H1 (cell line): ENCODE measurements at regions of chr11 and their contacts with region 1.

Region 1: DNA sequence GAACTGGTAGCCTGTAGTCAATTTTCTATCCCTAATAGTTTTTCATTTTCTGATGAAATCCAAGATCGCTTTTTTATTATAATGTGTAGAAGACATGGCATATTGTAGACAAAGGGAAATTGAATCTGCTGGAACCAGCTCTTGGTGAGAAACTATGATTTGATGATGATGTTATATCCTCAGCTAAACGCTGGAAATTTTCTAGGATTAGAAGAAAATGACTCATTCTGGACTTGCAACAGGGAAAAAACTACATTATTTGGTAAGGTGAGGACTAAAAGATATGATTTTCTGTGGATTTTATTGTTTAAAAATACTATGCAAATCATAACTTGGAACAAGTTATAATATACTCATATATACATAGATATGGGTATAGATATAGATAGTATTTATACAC is 14.1 kb upstream of the PGM2L1 start:
- DNase-seq: no peak
- H3K4me3 ChIP-seq: no peak overlapping the region
- H3K27ac ChIP-seq: no peak overlapping the region
- H3K4me1 ChIP-seq: peaks cover 0 to 4% (median 0%) of the 10 kb centered on the region in 4 experiments; a peak in 1 of 7 replicates
- H3K27me3 ChIP-seq: no peaks in the 10 kb centered on the region
- CTCF ChIP-seq: no peak
- EP300 ChIP-seq: no peak
- POLR2A ChIP-seq: no peak
- RAD21 ChIP-seq: no peak

Region 2: DNA sequence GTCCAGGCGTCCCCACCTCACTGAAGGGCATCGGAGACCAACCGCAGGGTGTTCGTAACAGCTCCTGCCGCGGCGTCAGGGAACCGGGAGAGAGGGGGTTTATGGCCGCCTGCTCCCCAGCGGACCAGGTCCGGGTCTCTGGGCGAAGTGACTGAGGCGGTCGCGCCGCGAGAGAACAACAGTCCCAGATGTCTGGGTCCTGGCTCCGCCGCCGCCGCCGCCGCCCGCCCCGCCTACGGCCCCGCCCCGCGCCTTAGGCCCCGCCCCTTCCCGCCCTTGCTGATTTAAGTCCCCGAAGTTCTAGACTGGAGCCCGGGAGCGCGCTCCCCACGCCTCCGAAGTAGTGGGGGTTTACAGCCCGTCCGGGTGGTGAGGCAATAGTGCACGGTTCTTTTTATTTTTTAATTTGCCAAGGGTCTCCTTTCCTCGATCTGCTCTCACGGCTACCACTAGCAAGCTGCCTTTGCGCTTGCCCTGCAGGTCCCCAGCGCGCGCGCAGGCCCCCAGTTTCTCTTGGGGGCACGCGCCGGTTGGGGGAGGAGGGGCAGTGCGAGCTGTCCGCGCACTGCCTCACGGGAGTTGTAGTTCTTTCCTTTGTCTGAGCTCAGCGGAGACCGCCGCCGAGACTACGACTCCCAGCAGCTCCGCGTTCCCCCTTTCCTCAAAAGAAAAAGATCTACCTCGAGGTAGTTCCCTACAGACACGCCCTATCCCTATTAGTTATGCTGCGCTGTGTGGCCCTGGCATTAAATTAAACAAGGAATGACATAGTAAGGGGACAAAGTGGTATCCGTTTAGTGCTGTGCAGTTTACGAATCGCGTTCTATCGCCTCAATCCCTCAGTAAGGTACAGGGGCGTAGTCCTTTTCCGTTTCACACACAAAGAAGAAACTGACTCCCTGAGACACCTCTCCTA is 13.8 kb before region 1 on chr11 and contains the start of gene PGM2L1:
- CTCF ChIA-PET with region 1: no interaction called
- POLR2A ChIA-PET with region 1: interaction called, 15 read pairs
- DNase-seq: peak; percentile 83 to 90
- H3K4me3 ChIP-seq: peak within 1 kb of the TSS; percentile 54 to 98 (median 82)
- H3K27ac ChIP-seq: peak within 1 kb of the TSS; percentile 65; the same call in 1 of the 2 replicates
- H3K4me1 ChIP-seq: peaks cover 0 to 3% (median 0%) of the 10 kb centered on the region in 4 experiments; a peak in 2 of 7 replicates
- H3K27me3 ChIP-seq: no peaks in the 10 kb centered on the region
- CTCF ChIP-seq: no peak
- EP300 ChIP-seq: no peak
- POLR2A ChIP-seq: peak in 1 of 2 experiments; percentile 81; a peak in 2 of 3 replicates
- RAD21 ChIP-seq: no peak
- total RNA-seq, gene PGM2L1: 40.0 and 42.7 TPM in 2 replicates